ENCODE measurements at regions of chr6 and their contacts with region 1.

Region 1: DNA sequence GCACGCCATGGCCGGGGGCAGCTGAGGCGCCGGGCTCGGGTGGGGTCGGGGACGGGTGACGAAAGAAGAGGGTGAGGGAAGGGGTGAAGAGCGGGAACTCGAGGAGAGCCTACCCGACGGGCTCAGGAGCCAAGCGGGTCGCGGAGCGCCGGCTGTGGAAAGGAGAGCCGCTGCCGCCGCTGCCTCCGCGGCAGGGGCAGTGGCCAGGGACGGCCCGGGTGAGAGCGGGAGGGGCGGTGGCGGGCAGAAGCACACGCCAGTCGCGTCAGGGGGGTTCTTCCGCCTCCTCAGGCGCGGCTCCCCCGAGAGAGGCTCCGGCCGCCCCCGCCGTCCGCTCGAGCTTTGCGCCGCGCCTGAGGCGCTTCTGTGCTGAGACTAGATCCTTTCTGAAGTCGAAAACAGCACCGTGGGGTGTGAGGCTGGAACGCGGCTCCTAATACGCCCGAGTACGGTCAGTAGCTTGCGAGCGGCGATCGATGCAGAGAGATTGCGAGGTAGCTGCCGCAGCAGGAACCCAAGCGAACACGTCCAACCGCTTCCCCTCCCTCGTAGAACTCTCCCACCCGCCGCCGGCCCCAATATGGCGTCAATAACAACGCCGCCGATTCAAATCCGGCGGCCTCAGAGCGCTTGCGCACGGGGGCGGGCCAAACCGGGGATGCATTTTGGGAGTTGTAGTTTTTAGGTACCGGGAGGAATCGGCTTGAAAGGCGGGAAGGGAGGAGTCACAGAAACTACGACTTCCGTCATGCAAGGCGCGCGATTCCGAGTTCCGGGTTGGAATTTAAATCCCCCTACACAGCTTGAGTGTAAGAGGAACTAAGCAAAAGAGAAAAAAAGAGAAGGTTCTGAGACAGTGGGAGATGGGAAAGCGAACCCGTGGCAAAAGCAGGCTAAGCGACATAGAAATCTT is at the start of gene AKIRIN2:
- DNase-seq: peak; percentile 98
- ATAC-seq: peak; percentile 85
- H3K4me3 ChIP-seq: peak within 1 kb of the TSS; percentile 72 to 97 (median 94)
- H3K27ac ChIP-seq: peak within 1 kb of the TSS; percentile 96
- H3K4me1 ChIP-seq: peaks cover 42% of the 10 kb centered on the region
- H3K27me3 ChIP-seq: no peaks in the 10 kb centered on the region; a peak in 1 of 5 replicates
- CTCF ChIP-seq: no peak
- EP300 ChIP-seq: peak in 1 of 2 experiments; percentile 13; a peak in 1 of 4 replicates
- POLR2A ChIP-seq: peak; percentile 93 to 96
- RAD21 ChIP-seq: no peak
- total RNA-seq, gene AKIRIN2: 23.4 and 29.2 TPM in 2 replicates

Region 2: GRCh38 chr6:87671555-87672029 is 30.3 kb before region 1 on chr6:
- CTCF ChIA-PET with region 1: no interaction called
- POLR2A ChIA-PET with region 1: interaction called, 7 read pairs
- in situ Hi-C with region 1: no loop called
- intact Hi-C with region 1: loop called (anchors 1 kb)
- DNase-seq: peak; percentile 97
- ATAC-seq: peak; percentile 76
- H3K4me3 ChIP-seq: peak overlapping the region in 1 of 3 experiments; percentile 33; a peak in 1 of 6 replicates
- H3K27ac ChIP-seq: peak overlapping the region; percentile 90
- H3K4me1 ChIP-seq: peaks cover 89% of the 10 kb centered on the region
- H3K27me3 ChIP-seq: no peaks in the 10 kb centered on the region
- CTCF ChIP-seq: no peak
- EP300 ChIP-seq: peak; percentile 91 to 99
- POLR2A ChIP-seq: no peak
- RAD21 ChIP-seq: no peak

Region 3: DNA sequence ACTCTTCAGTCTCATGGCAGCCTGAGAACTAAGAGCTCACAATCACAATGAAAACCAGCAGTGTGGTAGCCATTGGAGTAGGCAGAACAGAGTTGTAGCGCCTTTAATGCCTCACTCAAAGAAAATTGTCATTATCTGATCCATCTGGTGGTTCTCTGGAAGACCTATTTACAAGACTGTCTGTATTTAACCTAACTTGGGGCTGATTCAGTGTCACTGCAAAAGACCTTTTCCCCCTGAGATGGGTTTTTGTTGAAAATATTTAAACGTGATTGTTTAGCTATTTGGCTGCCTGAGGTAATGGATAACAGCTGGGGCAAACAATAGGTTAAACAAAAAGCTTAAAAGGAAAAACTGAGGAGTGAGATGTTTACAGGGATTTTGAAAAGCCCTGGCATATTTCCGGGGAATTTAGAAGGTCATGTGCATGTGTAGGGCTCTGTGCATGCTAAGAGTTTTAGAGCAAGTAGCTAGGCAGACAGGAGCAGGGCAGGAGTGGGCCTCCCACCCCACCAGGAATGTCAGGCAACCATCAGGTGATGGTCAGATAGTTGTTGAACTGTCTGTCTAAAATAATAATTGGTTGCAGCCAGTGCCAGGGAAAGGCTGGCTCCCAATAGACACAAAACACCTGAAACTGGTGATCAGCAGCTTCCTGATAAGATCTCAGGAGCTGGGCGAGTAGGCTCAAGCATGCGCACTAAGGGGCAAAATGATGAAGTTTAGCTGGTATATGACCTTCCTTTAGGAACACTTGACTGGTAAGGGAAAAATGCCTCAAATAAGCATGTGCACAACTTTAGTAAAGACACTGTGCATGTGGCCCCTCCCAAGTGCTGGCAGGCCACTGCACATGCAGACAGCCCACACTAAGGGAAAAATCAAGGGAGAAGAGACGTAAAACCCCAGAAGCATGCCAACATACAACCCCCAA is 70.9 kb after region 1 on chr6:
- CTCF ChIA-PET with region 1: no interaction called
- POLR2A ChIA-PET with region 1: interaction called, 14 read pairs
- in situ Hi-C with region 1: no loop called
- intact Hi-C with region 1: no loop called
- DNase-seq: peak; percentile 94
- ATAC-seq: peak; percentile 93
- H3K4me3 ChIP-seq: peak overlapping the region in 2 of 3 experiments; percentile 11 to 15; a peak in 2 of 6 replicates
- H3K27ac ChIP-seq: peak overlapping the region; percentile 77
- H3K4me1 ChIP-seq: peaks cover 66% of the 10 kb centered on the region
- H3K27me3 ChIP-seq: no peaks in the 10 kb centered on the region
- CTCF ChIP-seq: no peak
- EP300 ChIP-seq: peak in 1 of 2 experiments; percentile 60; a peak in 1 of 4 replicates
- POLR2A ChIP-seq: 0 out of 4 replicates have a peak, but pooled peaks of 1 of the 2 experiments have one; percentile 20
- RAD21 ChIP-seq: no peak

Region 4: GRCh38 chr6:87799651-87800050 is 97.7 kb after region 1 on chr6:
- CTCF ChIA-PET with region 1: no interaction called
- POLR2A ChIA-PET with region 1: interaction called, 13 read pairs
- in situ Hi-C with region 1: loop called (anchors 5 kb)
- intact Hi-C with region 1: loop called (anchors 1 kb)
- DNase-seq: no peak
- ATAC-seq: no peak
- H3K4me3 ChIP-seq: peak overlapping the region in 2 of 3 experiments; percentile 23 to 41; a peak in 2 of 6 replicates
- H3K27ac ChIP-seq: peak overlapping the region; percentile 85
- H3K4me1 ChIP-seq: peaks cover 83% of the 10 kb centered on the region
- H3K27me3 ChIP-seq: no peaks in the 10 kb centered on the region
- CTCF ChIP-seq: no peak
- EP300 ChIP-seq: no peak
- POLR2A ChIP-seq: no peak
- RAD21 ChIP-seq: no peak

Region 5: GRCh38 chr6:87907521-87907920 is 205.6 kb after region 1 on chr6:
- CTCF ChIA-PET with region 1: no interaction called
- POLR2A ChIA-PET with region 1: no interaction called
- in situ Hi-C with region 1: no loop called
- intact Hi-C with region 1: no loop called
- DNase-seq: no peak
- ATAC-seq: no peak
- H3K4me3 ChIP-seq: no peak overlapping the region
- H3K27ac ChIP-seq: no peak overlapping the region
- H3K4me1 ChIP-seq: peaks cover 15% of the 10 kb centered on the region
- H3K27me3 ChIP-seq: no peaks in the 10 kb centered on the region
- CTCF ChIP-seq: no peak
- EP300 ChIP-seq: no peak
- POLR2A ChIP-seq: no peak
- RAD21 ChIP-seq: no peak

Measured in HepG2 (cell line).